ENCODE measurements at regions of chr5 and their contacts with region 1.

Region 1: DNA sequence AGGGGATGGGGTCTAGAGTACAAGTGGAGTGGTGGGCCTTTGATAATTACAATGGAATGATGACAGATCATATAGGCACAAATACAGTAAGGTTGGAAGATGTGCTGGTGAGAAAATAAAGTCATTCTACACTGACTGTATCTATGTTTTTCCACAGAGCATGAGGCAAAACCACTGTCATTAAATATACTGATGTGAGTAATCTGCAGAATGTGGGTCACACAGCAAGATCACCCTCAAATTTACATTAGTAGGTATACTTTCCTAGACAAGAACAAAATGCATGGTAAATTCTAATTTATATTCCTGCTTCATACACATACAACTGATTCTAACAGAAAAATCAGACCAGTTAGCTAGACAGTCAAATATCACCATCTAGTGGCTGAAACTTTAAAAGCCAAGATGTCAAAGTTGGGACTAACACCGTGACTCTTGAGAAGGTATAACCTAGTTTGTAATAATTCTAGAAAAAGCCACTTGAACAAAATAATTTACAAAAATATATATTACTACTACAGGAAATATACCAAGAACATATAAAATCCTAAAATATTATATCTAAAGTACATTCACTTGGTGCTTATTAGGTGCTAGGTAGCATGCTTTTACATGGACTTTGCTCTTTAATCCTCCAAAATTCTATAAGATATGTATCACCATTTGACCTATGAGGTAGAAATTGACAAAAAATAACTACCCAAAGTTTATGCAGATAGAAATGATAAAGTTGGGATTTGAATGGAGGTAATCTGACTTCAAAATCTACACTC is 19.5 kb downstream of the TTC33 start:
- DNase-seq: no peak
- H3K4me3 Mint-ChIP-seq: no peak overlapping the region
- H3K27ac Mint-ChIP-seq: no peak overlapping the region
- H3K4me1 Mint-ChIP-seq: peaks cover 26% of the 10 kb centered on the region
- H3K27me3 Mint-ChIP-seq: no peaks in the 10 kb centered on the region

Region 2: DNA sequence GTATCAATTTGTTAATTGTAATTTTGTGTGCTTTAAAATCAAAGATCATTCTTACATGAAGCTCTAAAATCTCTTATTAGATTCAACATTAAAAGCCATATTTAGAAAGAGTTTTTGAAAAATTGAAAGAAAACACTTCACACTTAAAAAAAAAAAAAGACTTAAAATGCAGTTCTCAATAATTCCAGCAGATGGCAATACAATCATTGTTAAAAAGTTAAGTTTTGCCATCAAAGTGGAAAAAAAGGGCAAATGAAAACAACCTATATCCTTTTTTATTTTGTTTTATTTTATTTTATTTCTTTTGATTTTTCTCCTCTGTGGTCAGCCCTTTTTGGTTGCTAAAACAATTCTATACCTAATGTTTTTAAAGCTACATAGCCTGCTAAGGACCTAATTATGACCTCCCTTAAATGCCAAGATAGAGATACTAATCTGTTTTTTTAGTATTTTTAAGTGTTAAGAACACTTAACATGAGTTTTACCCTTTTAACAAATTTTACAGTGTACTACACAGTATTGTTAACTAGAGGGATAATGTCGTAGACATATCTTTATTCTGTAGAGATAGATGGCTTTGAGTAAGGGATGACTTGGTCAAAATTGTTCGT is 1157.3 kb before region 1 on chr5:
- CTCF ChIA-PET with region 1: no interaction called
- intact Hi-C with region 1: loop called (anchors 5 kb)
- DNase-seq: no peak
- H3K4me3 Mint-ChIP-seq: no peak overlapping the region
- H3K27ac Mint-ChIP-seq: no peak overlapping the region
- H3K4me1 Mint-ChIP-seq: peaks cover 8% of the 10 kb centered on the region
- H3K27me3 Mint-ChIP-seq: no peaks in the 10 kb centered on the region

Region 3: DNA sequence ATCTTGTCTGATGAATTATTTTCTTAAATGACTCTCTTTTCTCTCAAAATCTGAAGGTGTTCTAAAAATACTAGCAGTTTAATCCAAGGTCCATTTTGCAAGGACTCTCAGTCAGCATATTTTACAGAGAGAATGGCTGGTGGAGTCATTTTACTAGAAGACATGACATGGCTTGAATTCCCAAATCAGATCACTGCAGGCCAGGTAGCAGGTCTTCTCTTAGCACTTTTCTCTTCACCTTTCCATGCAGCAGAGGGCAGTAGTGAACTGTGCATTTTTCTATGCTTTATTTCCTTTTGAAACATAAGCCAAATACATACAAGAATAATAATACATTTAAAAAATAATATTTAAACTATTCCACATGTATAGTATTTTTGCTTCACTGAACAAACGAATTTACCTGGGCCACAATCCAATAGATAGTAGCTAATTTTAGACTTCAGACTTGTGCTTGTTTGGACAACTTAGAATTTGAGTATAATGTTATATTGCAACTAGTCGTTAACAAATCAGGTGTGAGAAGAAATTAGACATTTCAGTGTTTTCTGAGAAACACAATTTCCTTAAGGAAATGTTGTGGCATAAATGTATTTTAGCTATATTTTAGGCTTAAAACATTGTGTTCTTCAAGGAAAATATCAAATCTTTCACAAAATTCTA is 1022.1 kb before region 1 on chr5:
- CTCF ChIA-PET with region 1: interaction called, 7 read pairs
- intact Hi-C with region 1: loop called (anchors 1 kb)
- DNase-seq: peak; percentile 66
- H3K4me3 Mint-ChIP-seq: no peak overlapping the region
- H3K27ac Mint-ChIP-seq: no peak overlapping the region
- H3K4me1 Mint-ChIP-seq: no peaks in the 10 kb centered on the region
- H3K27me3 Mint-ChIP-seq: no peaks in the 10 kb centered on the region

Region 4: DNA sequence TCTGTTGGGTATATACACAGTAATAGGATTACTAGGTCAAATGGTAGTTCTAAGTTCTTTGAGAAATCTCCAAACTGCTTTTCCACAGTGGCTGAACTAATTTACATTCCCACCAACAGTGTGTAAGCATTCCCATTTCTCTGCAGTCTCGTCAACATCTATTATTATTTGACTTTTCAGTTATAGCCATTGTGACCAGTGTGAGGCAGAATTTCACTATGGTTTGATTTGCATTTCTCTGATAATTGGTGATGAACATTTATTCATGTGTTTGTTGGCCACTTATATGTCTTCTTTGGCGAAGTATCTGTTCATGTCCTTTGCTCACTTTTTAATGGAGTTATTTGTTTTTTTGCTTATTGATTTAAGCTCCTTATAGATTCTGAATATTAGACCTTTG is 715.3 kb before region 1 on chr5:
- CTCF ChIA-PET with region 1: no interaction called
- intact Hi-C with region 1: loop called (anchors 1 kb)
- DNase-seq: no peak
- H3K4me3 Mint-ChIP-seq: no peak overlapping the region
- H3K27ac Mint-ChIP-seq: no peak overlapping the region
- H3K4me1 Mint-ChIP-seq: no peaks in the 10 kb centered on the region
- H3K27me3 Mint-ChIP-seq: peaks cover 10% of the 10 kb centered on the region

Region 5: GRCh38 chr5:40165794-40166728 is 570.2 kb before region 1 on chr5:
- CTCF ChIA-PET with region 1: no interaction called
- intact Hi-C with region 1: loop called (anchors 1 kb)
- DNase-seq: peak; percentile 61
- H3K4me3 Mint-ChIP-seq: no peak overlapping the region
- H3K27ac Mint-ChIP-seq: peak overlapping the region; percentile 14
- H3K4me1 Mint-ChIP-seq: peaks cover 9% of the 10 kb centered on the region
- H3K27me3 Mint-ChIP-seq: no peaks in the 10 kb centered on the region

Region 6: GRCh38 chr5:40367255-40367654 is 369.0 kb before region 1 on chr5:
- CTCF ChIA-PET with region 1: interaction called, 3 read pairs
- intact Hi-C with region 1: loop called (anchors 5 kb)
- DNase-seq: peak; percentile 26
- H3K4me3 Mint-ChIP-seq: no peak overlapping the region
- H3K27ac Mint-ChIP-seq: no peak overlapping the region
- H3K4me1 Mint-ChIP-seq: peaks cover 19% of the 10 kb centered on the region
- H3K27me3 Mint-ChIP-seq: no peaks in the 10 kb centered on the region

Region 7: DNA sequence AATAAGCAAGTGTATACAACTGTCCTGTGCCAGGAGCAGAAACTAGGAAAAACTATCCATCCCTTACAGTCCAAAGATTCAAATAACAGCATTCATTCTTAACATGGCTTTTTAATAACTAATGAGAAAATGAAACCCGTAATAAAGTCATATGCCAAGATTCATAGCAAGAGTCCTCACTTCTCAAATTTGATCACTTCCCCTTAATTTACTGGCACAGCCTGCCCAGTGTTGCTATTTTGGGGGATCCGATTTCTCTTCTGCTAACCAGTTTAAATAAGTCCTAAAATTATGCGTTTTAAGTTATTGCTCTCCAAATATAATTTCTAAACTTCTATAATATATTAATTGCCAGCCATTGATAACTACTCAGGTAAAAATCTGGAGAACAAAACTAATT is 233.6 kb before region 1 on chr5:
- CTCF ChIA-PET with region 1: no interaction called
- intact Hi-C with region 1: loop called (anchors 1 kb)
- DNase-seq: no peak
- H3K4me3 Mint-ChIP-seq: no peak overlapping the region
- H3K27ac Mint-ChIP-seq: no peak overlapping the region
- H3K4me1 Mint-ChIP-seq: peaks cover 24% of the 10 kb centered on the region
- H3K27me3 Mint-ChIP-seq: no peaks in the 10 kb centered on the region

Measured in activated naive CD4-positive, alpha-beta T cell treated with anti-CD3 and anti-CD28 coated beads for 36 hours (primary cell).